ENCODE measurements at regions of chr1 and their contacts with region 1.

Region 1: GRCh38 chr1:235415008-235415904 is 48.0 kb downstream of the TBCE start:
- DNase-seq: peak; percentile 77
- ATAC-seq: peak; percentile 90
- H3K4me3 Mint-ChIP-seq: no peak overlapping the region
- H3K27ac Mint-ChIP-seq: peak overlapping the region; percentile 46
- H3K4me1 Mint-ChIP-seq: peaks cover 4% of the 10 kb centered on the region
- H3K27me3 Mint-ChIP-seq: no peaks in the 10 kb centered on the region

Region 2: GRCh38 chr1:235093696-235094592 is 321.3 kb before region 1 on chr1:
- CTCF ChIA-PET with region 1: interaction called, 29 read pairs
- DNase-seq: peak; percentile 88
- ATAC-seq: peak; percentile 90
- H3K4me3 Mint-ChIP-seq: no peak overlapping the region
- H3K27ac Mint-ChIP-seq: peak overlapping the region; percentile 54
- H3K4me1 Mint-ChIP-seq: peaks cover 19% of the 10 kb centered on the region
- H3K27me3 Mint-ChIP-seq: peaks cover 3% of the 10 kb centered on the region

Region 3: GRCh38 chr1:235160957-235161684 is 254.1 kb before region 1 on chr1 and contains the start of gene RBM34:
- CTCF ChIA-PET with region 1: interaction called, 13 read pairs
- DNase-seq: peak; percentile 95
- ATAC-seq: peak; percentile 92
- H3K4me3 Mint-ChIP-seq: peak within 1 kb of the TSS; percentile 91
- H3K27ac Mint-ChIP-seq: peak within 1 kb of the TSS; percentile 94
- H3K4me1 Mint-ChIP-seq: peaks cover 17% of the 10 kb centered on the region
- H3K27me3 Mint-ChIP-seq: no peaks in the 10 kb centered on the region
- total RNA-seq, gene RBM34: 111 to 116 TPM

Region 4: GRCh38 chr1:235253219-235253962 is 161.9 kb before region 1 on chr1:
- CTCF ChIA-PET with region 1: interaction called, 43 read pairs
- DNase-seq: peak; percentile 72
- ATAC-seq: peak; percentile 96
- H3K4me3 Mint-ChIP-seq: no peak overlapping the region
- H3K27ac Mint-ChIP-seq: peak overlapping the region; percentile 49
- H3K4me1 Mint-ChIP-seq: peaks cover 24% of the 10 kb centered on the region
- H3K27me3 Mint-ChIP-seq: no peaks in the 10 kb centered on the region

Region 5: DNA sequence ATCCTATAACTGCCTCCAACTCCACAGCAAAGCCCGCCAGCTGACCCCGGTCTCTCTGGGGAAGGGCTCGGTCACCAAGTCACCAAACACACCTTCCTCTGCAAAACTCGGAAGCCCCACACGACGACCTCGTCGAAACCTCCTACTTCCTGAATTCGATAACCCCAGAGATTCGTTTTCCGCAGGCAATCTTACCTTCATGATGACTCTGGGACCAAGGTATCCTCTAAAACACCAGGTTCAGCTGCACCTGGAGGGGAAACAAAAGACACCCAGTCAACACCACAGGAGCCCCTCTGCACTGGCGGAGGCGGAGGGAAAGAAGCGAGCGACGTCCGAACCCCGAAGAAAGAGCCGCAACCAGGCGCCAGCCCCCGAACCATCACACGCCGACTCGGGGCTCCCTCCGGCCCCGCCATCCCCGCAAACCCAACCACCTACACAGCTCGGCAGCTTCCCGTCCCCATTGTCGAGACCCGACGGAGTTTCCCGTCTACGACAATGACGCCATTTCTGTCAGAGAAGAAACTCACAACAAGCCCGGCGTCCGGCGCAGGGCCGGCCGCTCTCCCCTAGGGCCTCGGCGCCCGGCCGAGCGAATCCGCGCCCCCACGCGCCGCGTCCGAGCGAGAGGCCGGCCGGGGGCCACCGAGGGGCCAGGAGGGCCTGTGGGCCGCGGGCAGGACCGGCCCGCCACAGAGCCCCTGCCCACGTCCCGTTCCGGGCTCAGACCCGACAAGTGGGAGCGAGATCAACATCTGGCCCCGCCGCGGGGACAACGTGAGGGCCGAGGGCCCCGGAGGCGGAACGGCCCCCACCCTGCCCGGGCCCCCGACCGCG is 88.3 kb before region 1 on chr1:
- CTCF ChIA-PET with region 1: interaction called, 14 read pairs
- DNase-seq: peak; percentile 79
- ATAC-seq: peak; percentile 3
- H3K4me3 Mint-ChIP-seq: peak overlapping the region; percentile 99
- H3K27ac Mint-ChIP-seq: peak overlapping the region; percentile 98
- H3K4me1 Mint-ChIP-seq: peaks cover 49% of the 10 kb centered on the region
- H3K27me3 Mint-ChIP-seq: no peaks in the 10 kb centered on the region

Region 6: GRCh38 chr1:235460770-235461169 is 45.5 kb after region 1 on chr1:
- CTCF ChIA-PET with region 1: no interaction called
- DNase-seq: no peak
- ATAC-seq: no peak
- H3K4me3 Mint-ChIP-seq: no peak overlapping the region
- H3K27ac Mint-ChIP-seq: no peak overlapping the region
- H3K4me1 Mint-ChIP-seq: peaks cover 7% of the 10 kb centered on the region
- H3K27me3 Mint-ChIP-seq: no peaks in the 10 kb centered on the region

Region 7: DNA sequence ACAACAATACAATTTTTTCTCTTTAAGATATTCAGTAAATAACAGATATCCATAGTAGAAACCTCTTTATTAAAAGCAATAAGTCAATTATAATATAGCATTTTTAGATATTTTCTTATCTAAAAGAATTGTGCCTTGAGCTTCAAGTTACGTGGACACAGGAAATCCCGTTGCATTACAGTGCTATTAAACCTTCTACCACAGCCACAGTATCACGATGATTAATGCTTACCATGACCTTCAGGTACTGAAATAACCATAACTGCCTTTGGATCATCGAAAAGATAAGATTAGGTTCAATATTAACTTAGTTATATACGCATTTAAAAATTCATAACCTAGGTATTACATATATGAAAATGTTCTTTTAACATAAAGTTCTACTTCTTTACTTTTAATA is 71.1 kb after region 1 on chr1:
- CTCF ChIA-PET with region 1: no interaction called
- DNase-seq: no peak
- ATAC-seq: no peak
- H3K4me3 Mint-ChIP-seq: no peak overlapping the region
- H3K27ac Mint-ChIP-seq: no peak overlapping the region
- H3K4me1 Mint-ChIP-seq: no peaks in the 10 kb centered on the region
- H3K27me3 Mint-ChIP-seq: no peaks in the 10 kb centered on the region

Region 8: GRCh38 chr1:235567812-235568503 is 152.7 kb after region 1 on chr1:
- CTCF ChIA-PET with region 1: no interaction called
- DNase-seq: peak; percentile 69
- ATAC-seq: peak; percentile 83
- H3K4me3 Mint-ChIP-seq: no peak overlapping the region
- H3K27ac Mint-ChIP-seq: peak overlapping the region; percentile 66
- H3K4me1 Mint-ChIP-seq: peaks cover 14% of the 10 kb centered on the region
- H3K27me3 Mint-ChIP-seq: no peaks in the 10 kb centered on the region